GM10248 (cell line): ENCODE measurements at regions of chr12 and their contacts with region 1.

Region 1: DNA sequence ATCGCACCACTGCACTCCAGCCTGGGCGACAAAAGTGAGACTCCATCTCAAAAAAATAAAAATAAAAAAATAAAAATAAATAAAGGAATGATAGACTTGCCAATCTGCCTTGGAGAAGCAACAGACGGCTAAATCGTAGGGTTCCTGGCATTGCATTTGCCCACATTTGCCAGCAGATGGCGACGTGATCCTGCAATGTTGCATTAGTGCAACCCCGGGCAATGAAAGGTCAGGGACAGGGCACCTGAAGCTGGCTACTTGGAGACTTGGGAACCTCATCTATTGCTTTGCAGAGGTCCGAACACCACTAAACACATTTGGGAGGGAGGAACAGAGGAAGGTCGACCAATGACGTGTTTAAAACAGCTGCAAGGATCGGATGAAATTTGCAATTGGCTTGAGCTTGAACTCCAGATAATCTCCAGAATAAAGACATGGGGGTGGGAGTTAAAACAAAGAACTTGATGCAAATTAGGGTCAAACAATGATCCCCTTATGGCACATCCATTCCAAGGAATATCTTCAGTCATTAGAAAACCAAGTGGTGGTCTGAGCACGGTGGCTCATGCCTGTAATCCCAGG is 34.6 kb downstream of the SPRING1 start:
- DNase-seq: peak; percentile 73
- CTCF ChIP-seq: peak; percentile 95

Region 2: DNA sequence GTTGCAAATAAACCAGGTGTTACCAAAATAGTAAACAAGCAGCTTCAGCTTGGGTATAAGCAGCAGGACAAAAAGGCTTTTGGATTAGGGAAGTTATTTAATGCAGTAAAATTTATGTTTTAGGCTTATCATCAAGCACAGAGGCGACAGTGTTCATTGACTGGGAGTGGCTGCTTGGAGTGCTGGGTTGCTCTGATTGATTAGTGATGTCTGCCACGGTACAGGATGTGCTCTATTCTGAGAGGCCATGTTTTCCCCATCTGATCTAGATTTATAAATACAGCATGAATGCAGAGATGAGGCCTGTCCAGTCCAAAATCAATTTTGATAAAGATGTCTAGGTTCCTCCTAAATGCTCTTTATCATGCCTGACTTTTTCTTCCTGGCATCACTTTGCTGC is 60.6 kb before region 1 on chr12:
- CTCF ChIA-PET with region 1: no interaction called
- POLR2A ChIA-PET with region 1: no interaction called
- DNase-seq: no peak
- CTCF ChIP-seq: no peak

Region 3: GRCh38 chr12:116687888-116688287 is 15.4 kb before region 1 on chr12:
- CTCF ChIA-PET with region 1: interaction called, 18 read pairs
- POLR2A ChIA-PET with region 1: no interaction called
- DNase-seq: peak; percentile 46
- CTCF ChIP-seq: peak; percentile 25

Region 4: DNA sequence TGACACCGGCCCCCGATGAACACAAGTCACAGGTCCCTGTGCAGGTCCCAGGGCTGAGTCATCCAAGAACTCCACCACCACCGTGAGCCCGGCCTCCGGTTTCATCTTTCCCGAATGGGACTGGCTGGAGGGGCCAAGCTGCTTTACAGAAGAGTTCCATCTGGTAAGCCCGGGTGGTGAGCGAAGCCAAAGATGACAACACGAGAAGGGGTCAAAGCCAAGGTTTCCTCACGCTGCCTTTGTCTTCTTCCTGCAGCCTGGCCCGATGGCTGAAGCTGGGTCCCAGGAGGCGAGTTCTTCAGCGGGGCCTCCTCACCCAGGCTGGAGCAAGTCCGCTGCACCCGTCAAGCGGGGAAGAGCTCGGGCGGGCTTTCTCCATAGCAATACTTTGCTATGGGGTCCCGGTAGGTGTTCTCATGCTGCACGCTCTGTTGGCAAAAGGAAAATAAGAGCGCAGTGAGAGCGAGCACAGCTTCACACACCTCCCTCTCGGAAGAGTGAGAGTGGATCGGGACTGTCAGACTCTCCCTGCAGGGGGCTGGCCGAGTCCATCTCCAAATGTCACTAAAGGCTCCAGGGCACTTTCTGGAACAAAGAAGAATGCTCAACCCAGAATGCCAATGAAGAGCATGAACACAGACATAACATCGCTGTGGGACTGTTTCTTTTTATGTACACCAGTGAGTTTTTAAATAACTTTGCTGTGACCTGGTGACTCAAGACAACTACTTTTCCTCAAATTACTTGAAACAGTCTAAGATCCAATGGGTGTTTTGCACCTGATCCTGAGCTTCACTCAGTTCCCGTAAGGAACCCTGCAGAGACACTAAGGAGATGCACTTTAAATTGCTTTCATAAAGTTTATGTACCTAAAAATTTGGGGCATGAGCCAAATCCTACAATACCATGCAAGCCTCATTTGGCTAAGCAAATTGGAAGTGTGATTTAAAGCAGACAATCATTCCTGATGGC is 14.4 kb after region 1 on chr12:
- CTCF ChIA-PET with region 1: interaction called, 24 read pairs
- POLR2A ChIA-PET with region 1: no interaction called
- DNase-seq: no peak
- CTCF ChIP-seq: no peak

Region 5: GRCh38 chr12:116726694-116727093 is 23.4 kb after region 1 on chr12:
- CTCF ChIA-PET with region 1: interaction called, 13 read pairs
- POLR2A ChIA-PET with region 1: no interaction called
- DNase-seq: no peak
- CTCF ChIP-seq: no peak

Region 6: GRCh38 chr12:116813278-116814041 is 110.2 kb after region 1 on chr12:
- CTCF ChIA-PET with region 1: no interaction called
- POLR2A ChIA-PET with region 1: no interaction called
- DNase-seq: no peak
- CTCF ChIP-seq: no peak

Region 7: GRCh38 chr12:116882742-116883141 is 179.4 kb after region 1 on chr12:
- CTCF ChIA-PET with region 1: interaction called, 14 read pairs
- POLR2A ChIA-PET with region 1: no interaction called
- DNase-seq: peak; percentile 26
- CTCF ChIP-seq: peak; percentile 13